ENCODE measurements at regions of chr21 and their contacts with region 1.

Region 1: DNA sequence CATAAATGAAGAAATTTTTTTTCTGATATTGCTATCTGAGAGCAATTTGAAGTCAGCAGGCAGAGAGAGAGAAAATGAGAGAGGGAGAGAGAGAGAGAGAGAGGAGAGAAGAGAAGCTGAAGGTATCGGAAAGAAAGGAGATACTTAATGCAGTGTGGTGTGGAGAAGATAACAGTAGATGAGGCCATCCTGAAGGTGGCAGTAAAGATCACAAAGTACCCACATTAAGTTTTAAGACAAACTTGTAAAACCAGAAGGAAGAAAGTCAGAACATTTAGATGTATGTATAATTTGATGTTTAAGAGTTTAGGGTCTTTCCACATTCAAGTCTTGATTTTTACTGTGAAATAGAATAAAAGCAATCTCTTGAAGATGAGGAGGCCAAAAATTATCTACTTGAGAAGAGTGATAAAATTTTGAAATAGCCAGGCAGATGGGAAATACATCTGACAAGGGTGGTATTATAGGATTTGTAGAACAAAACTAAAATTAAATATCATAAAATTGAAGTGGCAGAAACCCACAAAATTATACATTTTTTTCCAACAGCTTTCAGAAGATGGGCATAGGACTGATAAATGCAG is 1753.4 kb downstream of the MRPL39 start:
- DNase-seq: peak in 4 of 5 donors; percentile 11 to 22 (median 16)
- H3K4me3 ChIP-seq: no peak overlapping the region
- H3K4me3 Mint-ChIP-seq: no peak overlapping the region
- H3K27ac ChIP-seq: no peak overlapping the region
- H3K27ac Mint-ChIP-seq: no peak overlapping the region
- H3K4me1 ChIP-seq: no peaks in the 10 kb centered on the region
- H3K4me1 Mint-ChIP-seq: peaks cover 0 to 5% (median 4%) of the 10 kb centered on the region in 4 donors
- H3K27me3 ChIP-seq: no peaks in the 10 kb centered on the region
- H3K27me3 Mint-ChIP-seq: peaks cover 0 to 2% of the 10 kb centered on the region in 2 donors

Region 2: DNA sequence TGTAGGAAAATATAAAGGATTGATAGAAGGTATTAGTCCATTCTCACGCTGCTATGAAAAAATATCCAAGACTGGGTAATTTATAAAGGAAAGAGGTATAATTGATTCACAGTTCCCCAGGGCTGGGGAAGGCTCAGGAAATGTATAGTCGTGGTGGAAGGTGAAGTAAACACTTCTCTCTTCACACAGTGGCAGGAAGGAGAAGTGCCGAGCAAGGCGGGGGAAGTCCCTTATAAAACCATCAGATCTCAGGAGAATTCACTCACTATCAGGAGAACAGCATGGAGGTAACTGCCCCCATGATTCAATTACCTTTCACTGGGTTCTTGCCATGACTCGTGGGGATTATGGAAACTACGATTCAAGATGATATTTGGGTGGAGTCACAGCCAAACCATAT is 52.6 kb before region 1 on chr21:
- CTCF ChIA-PET with region 1: no interaction called
- POLR2A ChIA-PET with region 1: no interaction called
- intact Hi-C with region 1: no loop called
- DNase-seq: no peak
- H3K4me3 ChIP-seq: no peak overlapping the region
- H3K4me3 Mint-ChIP-seq: no peak overlapping the region
- H3K27ac ChIP-seq: no peak overlapping the region
- H3K27ac Mint-ChIP-seq: no peak overlapping the region
- H3K4me1 ChIP-seq: no peaks in the 10 kb centered on the region
- H3K4me1 Mint-ChIP-seq: peaks cover 0 to 1% (median 0%) of the 10 kb centered on the region in 4 donors
- H3K27me3 ChIP-seq: no peaks in the 10 kb centered on the region
- H3K27me3 Mint-ChIP-seq: peaks cover 1 to 2% of the 10 kb centered on the region in 2 donors

Region 3: GRCh38 chr21:23876925-23877558 is 23.2 kb after region 1 on chr21:
- CTCF ChIA-PET with region 1: no interaction called
- POLR2A ChIA-PET with region 1: no interaction called
- intact Hi-C with region 1: no loop called
- DNase-seq: no peak
- H3K4me3 ChIP-seq: no peak overlapping the region
- H3K4me3 Mint-ChIP-seq: no peak overlapping the region
- H3K27ac ChIP-seq: no peak overlapping the region
- H3K27ac Mint-ChIP-seq: no peak overlapping the region
- H3K4me1 ChIP-seq: no peaks in the 10 kb centered on the region
- H3K4me1 Mint-ChIP-seq: peaks cover 0 to 4% (median under 1%) of the 10 kb centered on the region in 4 donors
- H3K27me3 ChIP-seq: no peaks in the 10 kb centered on the region
- H3K27me3 Mint-ChIP-seq: peaks cover 0 to 1% of the 10 kb centered on the region in 2 donors

Region 4: DNA sequence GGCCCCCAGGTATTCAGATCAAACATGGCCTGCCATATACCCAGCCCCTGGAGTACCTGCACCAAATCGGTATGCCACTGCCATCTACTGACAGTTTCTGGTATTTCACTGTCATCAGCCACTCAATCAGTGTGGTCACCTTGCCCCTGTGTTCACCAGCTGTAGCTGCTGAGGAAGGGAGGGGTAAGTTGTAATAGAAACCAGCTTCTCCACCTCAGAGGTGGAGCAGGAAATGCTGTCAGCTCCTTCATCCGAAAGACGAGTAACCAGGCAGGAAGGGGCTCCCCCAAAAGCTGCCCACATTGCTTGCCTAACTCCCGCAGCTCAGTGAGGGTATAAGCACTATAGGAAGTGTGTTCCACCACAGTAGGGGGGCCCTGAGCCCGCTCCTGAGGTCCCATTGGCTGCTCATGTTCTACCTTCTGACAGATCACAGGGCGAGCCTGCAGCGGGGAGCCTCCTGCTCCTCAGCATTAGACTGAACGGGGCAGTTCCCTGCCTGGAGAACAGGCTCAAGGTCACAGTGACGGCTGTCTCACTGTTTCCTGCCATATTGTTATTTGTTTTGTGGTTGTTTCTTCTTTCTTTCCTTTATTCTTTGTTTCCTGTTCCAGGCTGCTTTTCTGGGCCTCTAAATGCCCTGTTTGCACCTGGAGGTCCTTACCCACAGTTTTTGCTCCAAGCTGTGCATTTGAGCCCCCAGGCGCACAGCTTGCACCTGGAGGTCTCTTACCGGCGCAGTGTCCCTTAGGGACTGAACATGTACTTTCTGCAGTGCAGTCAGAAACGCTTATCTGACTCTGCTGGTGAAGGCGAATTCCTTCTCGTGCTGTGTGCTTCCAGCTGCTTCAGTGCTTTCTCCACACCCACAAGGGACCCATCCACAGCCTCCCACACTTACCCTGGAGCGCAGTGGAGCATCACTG is 115.1 kb after region 1 on chr21:
- CTCF ChIA-PET with region 1: interaction called, 8 read pairs
- POLR2A ChIA-PET with region 1: no interaction called
- intact Hi-C with region 1: loop called (anchors 1 kb)
- DNase-seq: peak; percentile 74 to 84 (median 81)
- H3K4me3 ChIP-seq: no peak overlapping the region
- H3K4me3 Mint-ChIP-seq: peak overlapping the region; percentile 45 to 80 (median 72)
- H3K27ac ChIP-seq: peak overlapping the region; percentile 31
- H3K27ac Mint-ChIP-seq: peak overlapping the region; percentile 57 to 90 (median 84)
- H3K4me1 ChIP-seq: peaks cover 13% of the 10 kb centered on the region
- H3K4me1 Mint-ChIP-seq: peaks cover 14 to 21% (median 19%) of the 10 kb centered on the region in 4 donors
- H3K27me3 ChIP-seq: no peaks in the 10 kb centered on the region
- H3K27me3 Mint-ChIP-seq: no peaks in the 10 kb centered on the region

Region 5: DNA sequence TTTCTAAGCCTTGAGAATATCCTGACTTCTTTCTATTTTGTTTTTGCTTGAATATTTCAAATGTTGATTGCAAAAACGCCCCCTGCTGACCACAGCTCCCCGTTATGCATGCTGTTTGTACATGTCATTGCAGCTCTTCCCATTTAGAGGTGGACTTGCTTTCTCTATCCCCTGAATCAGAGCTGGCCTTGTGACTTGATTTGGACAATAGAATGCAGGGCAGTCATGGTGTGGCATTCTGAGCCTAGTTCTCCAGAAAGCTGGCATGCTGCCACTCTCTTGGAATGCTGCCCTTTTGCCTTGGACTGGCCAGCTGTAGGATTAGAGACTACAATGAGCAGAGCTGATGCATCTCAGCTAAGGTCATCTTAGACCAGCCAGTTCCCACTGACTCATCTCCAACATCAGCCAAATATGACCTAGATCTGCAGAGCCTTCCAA is 191.9 kb after region 1 on chr21:
- CTCF ChIA-PET with region 1: interaction called, 7 read pairs
- POLR2A ChIA-PET with region 1: no interaction called
- intact Hi-C with region 1: loop called (anchors 5 kb)
- DNase-seq: peak in 1 of 5 donors; percentile 12
- H3K4me3 ChIP-seq: no peak overlapping the region
- H3K4me3 Mint-ChIP-seq: no peak overlapping the region
- H3K27ac ChIP-seq: no peak overlapping the region
- H3K27ac Mint-ChIP-seq: no peak overlapping the region
- H3K4me1 ChIP-seq: no peaks in the 10 kb centered on the region
- H3K4me1 Mint-ChIP-seq: peaks cover 0 to 4% (median 3%) of the 10 kb centered on the region in 4 donors
- H3K27me3 ChIP-seq: no peaks in the 10 kb centered on the region
- H3K27me3 Mint-ChIP-seq: no peaks in the 10 kb centered on the region

Region 6: DNA sequence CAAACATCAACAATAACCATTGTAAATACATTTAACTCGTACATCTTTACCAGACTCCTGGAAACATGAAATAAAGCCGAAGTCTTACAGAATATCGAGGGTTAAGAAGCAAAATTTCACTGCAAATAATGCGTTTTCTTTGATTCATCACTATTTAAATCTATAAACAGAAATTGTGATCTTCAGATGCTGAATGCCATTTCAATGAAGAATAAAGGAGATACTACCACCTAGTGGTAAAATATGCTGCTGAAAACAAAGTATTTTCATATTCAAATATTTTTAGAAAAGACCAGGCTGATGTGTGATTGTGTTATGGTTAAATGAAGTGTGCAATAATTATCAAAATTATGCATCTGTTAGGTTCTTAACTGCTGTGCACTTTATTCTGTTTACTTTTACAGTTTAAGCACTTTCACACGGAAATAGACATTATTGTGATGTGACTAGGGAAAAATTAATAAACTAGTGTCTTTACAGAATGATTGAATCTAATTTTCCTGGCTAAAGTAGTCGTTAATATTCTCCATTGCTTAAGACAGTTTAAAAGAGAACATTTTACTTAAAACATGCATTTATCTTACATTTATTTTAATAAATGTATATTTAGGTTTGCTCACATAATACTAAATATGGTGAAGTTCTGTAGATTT is 660.3 kb after region 1 on chr21:
- CTCF ChIA-PET with region 1: no interaction called
- POLR2A ChIA-PET with region 1: no interaction called
- intact Hi-C with region 1: loop called (anchors 2 kb)
- DNase-seq: no peak
- H3K4me3 ChIP-seq: no peak overlapping the region
- H3K4me3 Mint-ChIP-seq: no peak overlapping the region
- H3K27ac ChIP-seq: no peak overlapping the region
- H3K27ac Mint-ChIP-seq: no peak overlapping the region
- H3K4me1 ChIP-seq: no peaks in the 10 kb centered on the region
- H3K4me1 Mint-ChIP-seq: no peaks in the 10 kb centered on the region
- H3K27me3 ChIP-seq: no peaks in the 10 kb centered on the region
- H3K27me3 Mint-ChIP-seq: no peaks in the 10 kb centered on the region

Region 7: GRCh38 chr21:25385911-25386474 is 1532.1 kb after region 1 on chr21:
- CTCF ChIA-PET with region 1: interaction called, 7 read pairs
- POLR2A ChIA-PET with region 1: no interaction called
- intact Hi-C with region 1: loop called (anchors 2 kb)
- DNase-seq: peak in 4 of 5 donors; percentile 23 to 35 (median 30)
- H3K4me3 ChIP-seq: no peak overlapping the region
- H3K4me3 Mint-ChIP-seq: no peak overlapping the region
- H3K27ac ChIP-seq: no peak overlapping the region
- H3K27ac Mint-ChIP-seq: no peak overlapping the region
- H3K4me1 ChIP-seq: no peaks in the 10 kb centered on the region
- H3K4me1 Mint-ChIP-seq: peaks cover 0 to 3% (median 0%) of the 10 kb centered on the region in 4 donors
- H3K27me3 ChIP-seq: no peaks in the 10 kb centered on the region
- H3K27me3 Mint-ChIP-seq: peaks cover 0 to 3% of the 10 kb centered on the region in 2 donors

Measured in CD4-positive, alpha-beta memory T cell (primary cell).